Calu3 (cell line): ENCODE measurements at regions of chr7 and their contacts with region 1.

Region 1: GRCh38 chr7:25389489-25390106 is 161.3 kb upstream of the NPVF start:
- DNase-seq: peak; percentile 54
- H3K4me3 Mint-ChIP-seq: no peak overlapping the region
- H3K27ac Mint-ChIP-seq: no peak overlapping the region
- H3K4me1 Mint-ChIP-seq: peaks cover 23% of the 10 kb centered on the region
- H3K27me3 Mint-ChIP-seq: peaks cover 38% of the 10 kb centered on the region
- CTCF ChIP-seq: peak; percentile 45

Region 2: GRCh38 chr7:25167262-25167843 is 222.2 kb before region 1 on chr7:
- CTCF ChIA-PET with region 1: no interaction called
- intact Hi-C with region 1: loop called (anchors 10 kb)
- DNase-seq: peak; percentile 62
- H3K4me3 Mint-ChIP-seq: peak overlapping the region; percentile 40
- H3K27ac Mint-ChIP-seq: peak overlapping the region; percentile 50
- H3K4me1 Mint-ChIP-seq: peaks cover 38% of the 10 kb centered on the region
- H3K27me3 Mint-ChIP-seq: no peaks in the 10 kb centered on the region
- CTCF ChIP-seq: no peak

Region 3: GRCh38 chr7:25179771-25180591 is 209.6 kb before region 1 on chr7:
- CTCF ChIA-PET with region 1: no interaction called
- intact Hi-C with region 1: no loop called
- DNase-seq: peak; percentile 99
- H3K4me3 Mint-ChIP-seq: peak overlapping the region; percentile 83
- H3K27ac Mint-ChIP-seq: peak overlapping the region; percentile 57
- H3K4me1 Mint-ChIP-seq: no peaks in the 10 kb centered on the region
- H3K27me3 Mint-ChIP-seq: peaks cover 7% of the 10 kb centered on the region
- CTCF ChIP-seq: peak; percentile 99

Region 4: DNA sequence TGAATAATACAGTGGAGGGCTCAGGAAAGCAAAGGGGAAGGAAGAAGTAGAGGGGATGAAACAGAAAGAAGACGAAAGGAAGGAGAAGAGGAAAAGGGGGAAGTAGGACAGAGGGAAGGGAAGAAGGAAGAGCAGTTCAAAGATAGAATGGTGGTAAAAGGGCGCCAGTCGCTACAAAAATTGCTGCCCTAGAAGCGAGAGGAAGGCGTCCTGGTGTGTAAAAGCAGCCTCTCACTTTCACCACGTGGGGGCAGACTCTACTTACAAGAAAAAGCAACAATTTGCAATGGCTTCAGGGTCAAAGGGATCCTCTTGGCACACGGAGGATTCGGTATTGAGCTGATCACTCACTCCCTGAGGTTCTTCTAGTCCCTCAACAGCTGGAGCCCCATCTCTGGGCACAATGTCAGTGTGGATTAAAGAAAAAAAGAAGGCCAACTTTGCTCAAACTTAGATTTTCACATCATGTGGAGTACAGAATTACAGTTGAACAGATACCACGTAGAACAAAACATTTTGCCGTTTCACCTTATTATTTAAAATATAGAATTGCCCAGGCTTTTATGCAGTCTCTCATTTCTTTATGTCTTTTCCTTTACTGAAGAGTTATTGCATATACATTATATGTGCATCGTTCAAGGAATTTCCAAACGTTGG is 129.9 kb before region 1 on chr7:
- CTCF ChIA-PET with region 1: interaction called, 87 read pairs
- intact Hi-C with region 1: loop called (anchors 1 kb)
- DNase-seq: peak; percentile 80
- H3K4me3 Mint-ChIP-seq: no peak overlapping the region
- H3K27ac Mint-ChIP-seq: no peak overlapping the region
- H3K4me1 Mint-ChIP-seq: peaks cover 37% of the 10 kb centered on the region
- H3K27me3 Mint-ChIP-seq: peaks cover 60% of the 10 kb centered on the region
- CTCF ChIP-seq: peak; percentile 93

Region 5: DNA sequence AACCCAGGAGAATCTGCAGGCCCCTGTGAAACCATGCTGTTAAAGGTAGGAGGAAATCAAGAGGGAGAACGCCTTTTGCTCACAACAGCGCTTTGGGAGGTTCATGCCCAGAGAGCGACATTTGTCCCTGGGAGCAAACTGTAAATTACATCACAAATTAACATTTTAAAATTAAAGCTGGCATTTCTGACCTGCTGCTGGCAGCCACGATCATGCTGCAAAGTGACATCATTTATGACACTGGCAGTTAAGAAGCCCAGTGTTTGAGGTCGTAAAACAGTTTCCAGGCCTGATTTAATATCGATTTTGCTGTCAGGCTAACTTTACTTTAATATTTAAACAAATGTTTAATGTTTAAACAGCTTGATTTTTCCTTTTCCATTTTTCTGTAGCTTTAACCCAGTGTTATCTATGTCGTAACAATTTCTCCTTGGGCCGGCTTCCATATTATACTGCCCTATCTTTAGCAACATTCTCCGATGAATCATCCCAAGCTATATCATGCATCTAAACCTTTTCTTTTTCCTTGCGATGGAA is 74.8 kb before region 1 on chr7:
- CTCF ChIA-PET with region 1: no interaction called
- intact Hi-C with region 1: loop called (anchors 2 kb)
- DNase-seq: peak; percentile 30
- H3K4me3 Mint-ChIP-seq: peak overlapping the region; percentile 2
- H3K27ac Mint-ChIP-seq: peak overlapping the region; percentile 30
- H3K4me1 Mint-ChIP-seq: peaks cover 36% of the 10 kb centered on the region
- H3K27me3 Mint-ChIP-seq: no peaks in the 10 kb centered on the region
- CTCF ChIP-seq: no peak

Region 6: GRCh38 chr7:25565949-25566348 is 176.4 kb after region 1 on chr7:
- CTCF ChIA-PET with region 1: interaction called, 22 read pairs
- intact Hi-C with region 1: loop called (anchors 1 kb)
- DNase-seq: peak; percentile 70
- H3K4me3 Mint-ChIP-seq: no peak overlapping the region
- H3K27ac Mint-ChIP-seq: no peak overlapping the region
- H3K4me1 Mint-ChIP-seq: peaks cover 13% of the 10 kb centered on the region
- H3K27me3 Mint-ChIP-seq: peaks cover 43% of the 10 kb centered on the region
- CTCF ChIP-seq: peak; percentile 100

Region 7: GRCh38 chr7:25669961-25670841 is 280.6 kb after region 1 on chr7:
- CTCF ChIA-PET with region 1: no interaction called
- intact Hi-C with region 1: no loop called
- DNase-seq: no peak
- H3K4me3 Mint-ChIP-seq: no peak overlapping the region
- H3K27ac Mint-ChIP-seq: no peak overlapping the region
- H3K4me1 Mint-ChIP-seq: peaks cover 10% of the 10 kb centered on the region
- H3K27me3 Mint-ChIP-seq: peaks cover 88% of the 10 kb centered on the region
- CTCF ChIP-seq: no peak

Region 8: GRCh38 chr7:25851332-25852210 is 462.0 kb after region 1 on chr7:
- CTCF ChIA-PET with region 1: interaction called, 10 read pairs
- intact Hi-C with region 1: loop called (anchors 1 kb)
- DNase-seq: peak; percentile 96
- H3K4me3 Mint-ChIP-seq: peak overlapping the region; percentile 57
- H3K27ac Mint-ChIP-seq: peak overlapping the region; percentile 3
- H3K4me1 Mint-ChIP-seq: peaks cover 55% of the 10 kb centered on the region
- H3K27me3 Mint-ChIP-seq: peaks cover 28% of the 10 kb centered on the region
- CTCF ChIP-seq: peak; percentile 96